Activated CD4-positive, alpha-beta T cell treated with anti-CD3 and anti-CD28 coated beads, Interleukin-2, amount 10 ng/mL, durations not matched to agents 24 days and 14 days (primary cell): ENCODE measurements at regions of chr14 and their contacts with region 1.

Region 1: DNA sequence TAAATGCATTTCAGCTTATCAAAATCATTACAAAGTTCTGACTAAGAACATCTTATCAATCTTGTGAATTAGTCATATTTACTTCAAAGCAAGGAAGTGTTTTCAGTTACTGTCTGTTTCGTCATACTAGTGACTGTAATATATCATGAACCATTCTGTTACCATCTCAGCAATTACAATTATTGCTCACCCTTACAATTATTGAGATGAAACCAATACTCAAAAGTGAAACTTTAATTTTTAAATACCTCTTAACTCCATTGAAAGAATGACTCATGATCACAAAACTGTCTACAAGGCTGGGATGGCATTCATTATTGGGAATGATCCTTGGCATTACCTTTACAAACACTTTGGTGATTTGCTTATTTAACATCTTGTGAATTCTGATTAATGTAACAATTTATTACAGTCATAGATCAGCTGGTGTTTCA is 90.3 kb downstream of the RPS6KA5 start:
- DNase-seq: no peak
- H3K4me3 Mint-ChIP-seq: peak overlapping the region; percentile 74
- H3K27ac Mint-ChIP-seq: peak overlapping the region; percentile 90
- H3K4me1 Mint-ChIP-seq: peaks cover 38% of the 10 kb centered on the region
- H3K27me3 Mint-ChIP-seq: no peaks in the 10 kb centered on the region

Region 2: DNA sequence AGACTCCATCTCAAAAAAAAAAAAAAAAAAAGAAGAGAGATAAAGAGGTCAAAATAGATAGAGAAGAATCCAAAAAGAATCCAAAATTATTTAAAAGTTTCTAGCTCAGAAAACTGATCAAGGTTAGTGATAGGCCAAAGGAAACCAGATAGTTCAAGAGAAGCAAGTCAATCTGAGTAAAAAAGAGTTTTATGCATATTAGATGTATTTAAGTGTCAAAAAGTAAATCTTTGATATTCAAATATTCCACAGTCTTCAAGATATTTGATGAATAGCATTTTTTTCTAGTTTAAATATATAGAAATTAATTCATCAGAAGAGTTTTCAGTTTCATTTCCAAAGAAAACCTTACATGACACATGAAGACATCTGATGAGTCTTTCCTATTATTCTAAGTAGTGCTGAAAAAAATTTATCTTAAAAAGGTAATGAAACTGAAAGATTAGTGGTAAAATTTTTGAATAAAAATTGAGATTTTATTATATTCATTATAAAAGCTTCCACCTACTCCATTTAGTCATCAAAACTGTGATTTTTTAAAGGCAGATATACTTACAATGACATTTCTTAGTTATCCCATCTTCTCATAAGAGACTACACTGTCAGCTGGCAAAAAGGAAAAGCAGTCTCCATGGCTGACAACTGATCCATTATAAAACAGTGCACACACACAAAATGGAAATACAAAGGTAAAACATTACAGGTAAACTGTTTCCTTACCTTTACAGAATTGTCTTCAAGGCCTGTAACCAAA is 21.7 kb after region 1 on chr14:
- intact Hi-C with region 1: loop called (anchors 1 kb)
- DNase-seq: no peak
- H3K4me3 Mint-ChIP-seq: no peak overlapping the region
- H3K27ac Mint-ChIP-seq: peak overlapping the region; percentile 35
- H3K4me1 Mint-ChIP-seq: peaks cover 32% of the 10 kb centered on the region
- H3K27me3 Mint-ChIP-seq: no peaks in the 10 kb centered on the region

Region 3: DNA sequence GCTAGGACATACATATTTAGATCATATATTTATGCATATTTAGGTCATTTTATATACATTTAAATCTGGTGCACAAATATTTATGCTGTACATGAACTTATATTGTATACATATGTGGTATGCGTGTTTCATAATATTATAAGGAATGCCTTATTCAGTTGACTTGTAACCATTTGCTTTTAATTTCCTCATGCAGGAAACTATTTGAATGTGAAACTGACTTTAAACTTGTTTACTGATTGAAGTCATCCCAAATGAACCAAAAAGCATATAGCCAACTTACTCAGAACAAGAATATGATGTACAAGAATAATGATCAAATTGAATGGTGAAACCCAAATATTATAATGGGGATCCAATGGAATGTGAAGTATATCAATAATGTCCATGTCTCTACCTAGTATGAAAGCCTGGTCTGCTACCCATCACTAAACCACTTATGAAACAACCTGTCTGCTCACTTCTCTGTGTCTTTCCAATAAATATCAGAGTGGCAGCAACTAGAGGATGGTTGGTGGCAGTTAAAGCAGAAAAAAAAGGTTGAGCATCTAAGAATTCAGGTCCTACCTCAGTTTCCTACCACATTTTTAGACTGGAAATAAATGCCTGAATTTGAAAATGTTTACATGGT is 51.9 kb after region 1 on chr14:
- intact Hi-C with region 1: loop called (anchors 1 kb)
- DNase-seq: peak; percentile 82
- H3K4me3 Mint-ChIP-seq: peak overlapping the region; percentile 83
- H3K27ac Mint-ChIP-seq: peak overlapping the region; percentile 93
- H3K4me1 Mint-ChIP-seq: peaks cover 41% of the 10 kb centered on the region
- H3K27me3 Mint-ChIP-seq: no peaks in the 10 kb centered on the region

Region 4: DNA sequence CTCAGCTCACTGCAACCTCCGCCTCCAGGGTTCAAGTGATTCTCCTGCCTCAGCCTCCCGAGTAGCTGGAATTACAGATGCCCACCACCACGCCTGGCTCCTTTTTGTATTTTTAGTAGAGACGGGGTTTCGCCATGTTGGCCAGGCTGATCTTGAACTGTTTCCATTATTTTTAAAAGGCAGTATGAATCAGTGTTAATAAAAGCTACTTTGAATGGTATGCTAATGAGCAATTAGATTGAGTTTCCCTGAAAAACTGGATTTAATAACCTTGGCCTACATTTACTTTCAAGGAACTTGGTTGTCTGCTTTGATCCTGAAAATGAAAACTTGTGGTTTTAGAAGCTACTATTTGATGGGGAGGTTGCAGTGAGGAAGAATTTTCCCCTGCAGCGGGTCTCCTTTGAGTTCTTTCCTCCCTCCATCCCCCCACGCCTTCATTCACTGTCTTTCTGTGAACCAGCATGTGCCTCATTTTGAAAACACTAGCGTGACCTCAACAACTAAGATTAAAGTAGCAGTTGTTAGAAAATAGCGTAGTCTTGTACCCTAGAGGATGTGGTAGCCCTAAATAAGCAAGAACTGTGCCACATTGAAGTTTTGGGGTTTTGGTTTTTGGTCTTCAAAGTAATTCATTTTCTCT is 108.0 kb after region 1 on chr14:
- intact Hi-C with region 1: loop called (anchors 1 kb)
- DNase-seq: peak; percentile 91
- H3K4me3 Mint-ChIP-seq: peak overlapping the region; percentile 45
- H3K27ac Mint-ChIP-seq: peak overlapping the region; percentile 61
- H3K4me1 Mint-ChIP-seq: peaks cover 36% of the 10 kb centered on the region
- H3K27me3 Mint-ChIP-seq: no peaks in the 10 kb centered on the region